ENCODE measurements at regions of chr2 and their contacts with region 1.

Region 1: DNA sequence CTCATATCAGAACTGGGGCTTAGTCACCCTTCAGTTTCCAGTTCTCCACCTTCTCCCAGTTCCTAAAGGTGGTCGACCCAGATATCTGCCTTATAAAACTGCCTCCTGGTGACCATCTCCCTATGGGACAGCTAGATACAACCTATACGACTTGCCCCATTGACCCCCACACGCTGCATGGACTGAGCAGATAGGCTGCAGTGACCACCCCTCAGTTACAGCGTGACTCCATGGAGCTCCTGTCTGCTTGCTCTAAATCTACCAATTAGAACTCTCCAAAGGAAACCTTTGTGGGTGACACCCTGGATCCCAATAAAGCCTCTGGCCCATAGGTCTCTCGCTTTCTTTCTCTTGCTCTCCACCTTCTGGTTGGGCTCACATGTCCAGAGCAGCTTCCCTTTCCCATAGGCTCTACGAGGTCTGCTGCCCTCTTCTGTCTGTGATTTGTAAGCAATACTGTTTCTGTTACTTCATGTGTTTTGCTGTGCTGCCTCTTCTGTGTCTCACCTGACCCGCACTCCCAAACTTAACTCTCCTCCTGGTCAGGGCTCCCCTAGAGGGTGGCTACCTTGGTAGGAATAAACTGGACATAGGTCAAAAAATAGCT is 971.3 kb upstream of the FAM98A start:
- DNase-seq: peak; percentile 54 to 59
- H3K4me3 ChIP-seq: no peak overlapping the region
- H3K4me3 Mint-ChIP-seq: no peak overlapping the region
- H3K27ac Mint-ChIP-seq: no peak overlapping the region
- H3K4me1 ChIP-seq: no peaks in the 10 kb centered on the region
- H3K4me1 Mint-ChIP-seq: no peaks in the 10 kb centered on the region
- H3K27me3 ChIP-seq: no peaks in the 10 kb centered on the region
- H3K27me3 Mint-ChIP-seq: no peaks in the 10 kb centered on the region
- CTCF ChIP-seq: peak; percentile 44 to 68

Region 2: GRCh38 chr2:33673937-33674336 is 896.4 kb before region 1 on chr2:
- CTCF ChIA-PET with region 1: interaction called, 3 read pairs
- POLR2A ChIA-PET with region 1: no interaction called
- intact Hi-C with region 1: loop called (anchors 2 kb)
- DNase-seq: no peak
- H3K4me3 ChIP-seq: no peak overlapping the region
- H3K4me3 Mint-ChIP-seq: no peak overlapping the region
- H3K27ac Mint-ChIP-seq: no peak overlapping the region
- H3K4me1 ChIP-seq: no peaks in the 10 kb centered on the region
- H3K4me1 Mint-ChIP-seq: no peaks in the 10 kb centered on the region
- H3K27me3 ChIP-seq: no peaks in the 10 kb centered on the region
- H3K27me3 Mint-ChIP-seq: peaks cover 7% of the 10 kb centered on the region
- CTCF ChIP-seq: no peak

Region 3: DNA sequence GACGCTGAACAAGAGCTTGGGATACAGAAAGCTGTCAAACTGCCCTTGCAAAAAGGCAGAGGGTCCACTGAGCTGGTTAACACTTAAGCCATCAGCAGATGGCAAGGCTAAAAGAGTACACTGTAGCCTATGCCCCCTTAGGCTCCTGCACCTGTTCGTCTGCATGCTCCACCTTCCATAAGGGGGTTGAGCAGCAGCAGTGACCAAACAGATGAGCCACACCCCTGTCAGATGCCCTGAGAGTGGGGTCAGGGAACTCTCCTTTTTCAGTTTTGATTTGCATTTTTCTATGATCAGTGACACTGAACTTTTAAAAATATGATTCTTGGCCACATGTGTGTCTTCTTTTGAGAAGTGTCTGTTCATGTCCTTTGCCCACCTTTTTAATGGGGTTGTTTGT is 568.8 kb before region 1 on chr2:
- CTCF ChIA-PET with region 1: no interaction called
- POLR2A ChIA-PET with region 1: no interaction called
- intact Hi-C with region 1: no loop called
- DNase-seq: no peak
- H3K4me3 ChIP-seq: no peak overlapping the region
- H3K4me3 Mint-ChIP-seq: no peak overlapping the region
- H3K27ac Mint-ChIP-seq: no peak overlapping the region
- H3K4me1 ChIP-seq: no peaks in the 10 kb centered on the region
- H3K4me1 Mint-ChIP-seq: no peaks in the 10 kb centered on the region
- H3K27me3 ChIP-seq: no peaks in the 10 kb centered on the region
- H3K27me3 Mint-ChIP-seq: peaks cover 3% of the 10 kb centered on the region
- CTCF ChIP-seq: no peak

Region 4: GRCh38 chr2:34012715-34013302 is 557.6 kb before region 1 on chr2:
- CTCF ChIA-PET with region 1: interaction called, 4 read pairs
- POLR2A ChIA-PET with region 1: no interaction called
- intact Hi-C with region 1: loop called (anchors 2 kb)
- DNase-seq: peak; percentile 75 to 77
- H3K4me3 ChIP-seq: no peak overlapping the region
- H3K4me3 Mint-ChIP-seq: no peak overlapping the region
- H3K27ac Mint-ChIP-seq: no peak overlapping the region
- H3K4me1 ChIP-seq: 0 out of 2 replicates have a peak, but pooled peaks cover 3% of the 10 kb centered on the region
- H3K4me1 Mint-ChIP-seq: no peaks in the 10 kb centered on the region
- H3K27me3 ChIP-seq: no peaks in the 10 kb centered on the region
- H3K27me3 Mint-ChIP-seq: peaks cover 9% of the 10 kb centered on the region
- CTCF ChIP-seq: peak; percentile 80

Region 5: GRCh38 chr2:34738691-34739090 is 168.3 kb after region 1 on chr2:
- CTCF ChIA-PET with region 1: no interaction called
- POLR2A ChIA-PET with region 1: no interaction called
- intact Hi-C with region 1: loop called (anchors 5 kb)
- DNase-seq: peak in 1 of 2 experiments; percentile 34
- H3K4me3 ChIP-seq: no peak overlapping the region
- H3K4me3 Mint-ChIP-seq: no peak overlapping the region
- H3K27ac Mint-ChIP-seq: no peak overlapping the region
- H3K4me1 ChIP-seq: no peaks in the 10 kb centered on the region
- H3K4me1 Mint-ChIP-seq: no peaks in the 10 kb centered on the region
- H3K27me3 ChIP-seq: no peaks in the 10 kb centered on the region
- H3K27me3 Mint-ChIP-seq: peaks cover 3% of the 10 kb centered on the region
- CTCF ChIP-seq: peak; percentile 37 to 47